AG04449 (cell line): ENCODE measurements at regions of chr10 and their contacts with region 1.

Region 1: GRCh38 chr10:117174439-117175214 is 22.7 kb upstream of the KCNK18 start:
- DNase-seq: no peak
- H3K4me3 ChIP-seq: peak overlapping the region; percentile 44
- CTCF ChIP-seq: peak; percentile 77

Region 2: DNA sequence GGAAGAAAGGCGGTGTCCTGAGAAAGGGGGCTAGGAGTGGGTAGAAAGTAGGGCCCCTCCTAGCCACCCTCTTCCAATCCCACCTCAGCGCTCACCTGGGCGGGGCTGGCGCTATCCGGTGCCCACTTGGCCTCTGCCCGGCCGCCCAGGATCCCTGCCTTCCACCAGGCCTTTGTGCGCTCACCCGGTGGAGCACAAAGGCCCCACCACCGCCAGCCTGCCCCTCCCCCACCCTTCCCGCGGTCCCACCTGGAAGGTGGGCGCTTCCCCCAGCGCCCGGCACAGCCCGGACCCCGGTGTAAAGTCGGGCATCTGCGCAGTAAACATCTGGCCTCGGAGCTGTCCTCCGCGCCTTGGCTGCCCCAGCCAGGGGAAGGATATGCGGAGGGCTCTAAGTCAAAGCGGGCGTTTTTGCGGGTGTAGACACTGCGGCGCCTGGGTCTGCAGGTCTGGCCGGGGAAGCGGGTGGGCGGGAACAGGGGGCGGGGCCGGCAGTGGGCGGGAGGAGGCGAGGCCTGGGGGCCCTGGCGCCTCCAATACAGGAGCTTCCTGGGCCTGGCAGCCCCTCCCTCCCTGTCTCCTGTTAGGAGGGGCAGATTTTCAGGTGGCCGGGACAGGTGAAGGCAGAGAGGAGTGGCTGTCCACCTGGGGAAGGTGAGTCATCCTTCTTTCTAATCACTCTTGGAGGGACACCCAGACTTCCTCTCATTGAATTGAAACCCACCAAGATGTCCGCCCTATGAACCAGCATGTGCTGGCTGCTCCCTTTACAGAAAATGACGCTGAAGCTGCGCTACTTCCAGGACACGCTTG is 504.6 kb before region 1 on chr10:
- CTCF ChIA-PET with region 1: interaction called, 11 read pairs
- POLR2A ChIA-PET with region 1: no interaction called
- DNase-seq: no peak
- H3K4me3 ChIP-seq: no peak overlapping the region; the same call in 1 of the 2 replicates
- CTCF ChIP-seq: no peak

Region 3: GRCh38 chr10:116690356-116691322 is 484.0 kb before region 1 on chr10:
- CTCF ChIA-PET with region 1: interaction called, 23 read pairs
- POLR2A ChIA-PET with region 1: no interaction called
- DNase-seq: no peak
- H3K4me3 ChIP-seq: no peak overlapping the region
- CTCF ChIP-seq: peak; percentile 2

Region 4: GRCh38 chr10:116809483-116810119 is 365.0 kb before region 1 on chr10:
- CTCF ChIA-PET with region 1: interaction called, 14 read pairs
- POLR2A ChIA-PET with region 1: no interaction called
- DNase-seq: no peak
- H3K4me3 ChIP-seq: no peak overlapping the region
- CTCF ChIP-seq: no peak

Region 5: DNA sequence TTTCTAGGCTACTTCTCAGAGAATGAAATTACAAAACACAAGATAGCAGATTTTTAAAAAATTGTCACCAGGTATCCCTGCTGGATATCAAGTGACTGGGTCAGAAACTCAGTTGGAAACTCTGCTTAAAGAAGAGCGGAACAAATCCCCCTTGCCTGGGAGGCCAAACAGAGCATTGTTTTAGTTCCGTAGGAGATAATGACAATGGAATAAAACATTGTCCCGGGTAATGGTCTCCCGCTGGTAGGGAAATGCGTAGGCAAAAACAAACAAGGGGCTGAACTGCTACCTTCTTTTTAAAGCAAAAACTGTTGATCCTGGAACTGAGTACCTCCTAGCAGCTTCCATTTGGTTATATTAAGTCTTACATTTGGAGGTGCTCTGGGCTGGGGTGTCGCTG is 15.2 kb before region 1 on chr10:
- CTCF ChIA-PET with region 1: interaction called, 19 read pairs
- POLR2A ChIA-PET with region 1: no interaction called
- DNase-seq: no peak
- H3K4me3 ChIP-seq: no peak overlapping the region
- CTCF ChIP-seq: no peak

Region 6: DNA sequence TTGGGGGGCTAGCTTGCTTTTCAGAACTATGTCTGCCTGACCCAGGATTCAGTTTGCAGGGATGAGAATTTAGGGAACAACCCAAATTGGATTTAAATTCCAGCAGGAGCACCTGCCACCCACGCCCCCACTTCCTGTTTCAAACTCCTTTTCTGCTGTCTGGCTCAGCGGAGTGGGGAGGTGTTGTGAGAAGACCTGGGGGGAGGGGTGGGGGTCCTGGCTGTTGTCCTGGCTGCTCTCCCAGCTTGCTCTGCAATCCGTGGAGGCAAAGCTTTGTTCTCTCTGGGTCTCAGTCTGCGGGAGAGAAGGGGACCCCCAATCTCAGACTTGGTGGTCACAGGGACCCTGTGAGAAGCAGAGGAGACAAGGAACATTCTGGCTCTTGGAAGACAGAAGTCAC is 23.5 kb after region 1 on chr10:
- CTCF ChIA-PET with region 1: interaction called, 10 read pairs
- POLR2A ChIA-PET with region 1: no interaction called
- DNase-seq: no peak
- H3K4me3 ChIP-seq: no peak overlapping the region
- CTCF ChIP-seq: no peak